Right cardiac atrium (tissue), 5 donors: ENCODE measurements at regions of chrX and their contacts with region 1.

Region 1: GRCh38 chrX:18210470-18210869 is 10.2 kb downstream of the BEND2 start:
- DNase-seq: no peak
- ATAC-seq: no peak
- H3K4me3 ChIP-seq: no peak overlapping the region
- H3K27ac ChIP-seq: no peak overlapping the region
- H3K4me1 ChIP-seq: no peaks in the 10 kb centered on the region
- H3K27me3 ChIP-seq: no peaks in the 10 kb centered on the region

Region 2: GRCh38 chrX:17788439-17788838 is 422.0 kb before region 1 on chrX:
- intact Hi-C with region 1: loop called in 1 of 4 experiments (anchors 5 kb)
- DNase-seq: peak in 2 of 3 donors; percentile 60 to 63
- ATAC-seq: peak; percentile 62 to 82
- H3K4me3 ChIP-seq: no peak overlapping the region
- H3K27ac ChIP-seq: no peak overlapping the region
- H3K4me1 ChIP-seq: peaks cover 2% of the 10 kb centered on the region
- H3K27me3 ChIP-seq: no peaks in the 10 kb centered on the region